ENCODE measurements at regions of chr20 and their contacts with region 1.

Region 1: DNA sequence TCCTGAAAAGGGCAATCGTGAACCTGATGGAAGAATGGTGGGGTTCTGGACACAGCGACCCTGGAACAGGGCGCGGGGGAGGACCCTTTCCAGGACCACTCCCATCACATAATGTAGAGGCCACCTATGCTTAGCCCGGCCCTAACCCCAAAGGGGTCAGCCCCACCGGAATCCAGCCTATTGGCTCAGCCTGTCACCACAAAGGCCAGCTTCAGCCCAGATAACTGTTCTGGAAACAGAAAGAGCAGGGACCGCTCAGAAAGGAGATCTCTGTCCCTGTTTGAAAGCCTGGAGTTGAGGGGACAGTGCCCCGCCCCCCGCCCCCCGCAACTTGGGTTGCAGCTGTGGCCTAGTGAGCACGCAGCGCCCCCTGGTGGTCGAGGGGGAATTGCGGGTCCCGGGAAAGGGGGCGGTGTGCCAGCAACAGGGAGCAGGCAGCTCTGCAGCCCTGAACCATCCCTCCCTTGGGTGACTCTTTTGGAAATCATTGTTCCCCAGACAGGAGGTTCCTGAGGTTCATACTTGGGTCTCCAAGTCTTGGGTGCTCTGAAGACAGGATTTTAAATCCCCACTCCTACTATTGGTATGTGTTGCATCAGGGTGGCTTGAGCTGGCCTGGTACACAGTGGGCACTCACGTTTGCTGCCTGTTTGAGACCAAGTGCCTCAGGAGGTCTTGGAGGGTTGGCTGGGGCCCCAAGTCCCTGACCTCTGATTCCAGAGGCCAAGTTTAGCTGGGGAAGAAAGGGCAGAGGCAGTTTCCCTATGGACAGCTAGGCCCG is 1.5 kb downstream of the SIGLEC1 start:
- DNase-seq: peak; percentile 60
- H3K4me3 Mint-ChIP-seq: no peak overlapping the region
- H3K27ac Mint-ChIP-seq: no peak overlapping the region
- H3K4me1 Mint-ChIP-seq: no peaks in the 10 kb centered on the region
- H3K27me3 Mint-ChIP-seq: no peaks in the 10 kb centered on the region
- CTCF ChIP-seq: peak; percentile 92

Region 2: DNA sequence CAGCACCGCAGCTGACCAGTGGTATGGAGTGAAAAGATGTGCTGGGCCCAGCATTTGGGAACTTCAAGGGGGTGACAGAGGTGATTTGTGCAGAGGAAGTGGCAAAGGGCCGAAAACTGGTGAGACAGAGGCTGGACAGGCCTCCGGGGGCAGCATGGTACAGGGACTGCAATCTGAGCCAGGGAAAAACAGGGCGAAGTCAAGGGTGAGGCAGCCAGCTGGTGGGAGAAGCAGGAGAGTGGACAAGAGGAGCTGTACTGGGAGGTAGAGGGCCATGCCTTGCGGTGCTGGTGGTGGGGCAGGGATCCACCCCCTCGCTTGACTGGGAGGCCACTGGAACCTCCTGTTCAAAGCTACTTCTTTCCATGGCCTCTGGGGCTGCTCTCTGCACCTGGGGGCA is 40.4 kb before region 1 on chr20:
- CTCF ChIA-PET with region 1: interaction called, 154 read pairs
- POLR2A ChIA-PET with region 1: interaction called, 3 read pairs
- intact Hi-C with region 1: no loop called
- DNase-seq: no peak
- H3K4me3 Mint-ChIP-seq: no peak overlapping the region
- H3K27ac Mint-ChIP-seq: no peak overlapping the region
- H3K4me1 Mint-ChIP-seq: no peaks in the 10 kb centered on the region
- H3K27me3 Mint-ChIP-seq: peaks cover 36% of the 10 kb centered on the region
- CTCF ChIP-seq: no peak

Region 3: DNA sequence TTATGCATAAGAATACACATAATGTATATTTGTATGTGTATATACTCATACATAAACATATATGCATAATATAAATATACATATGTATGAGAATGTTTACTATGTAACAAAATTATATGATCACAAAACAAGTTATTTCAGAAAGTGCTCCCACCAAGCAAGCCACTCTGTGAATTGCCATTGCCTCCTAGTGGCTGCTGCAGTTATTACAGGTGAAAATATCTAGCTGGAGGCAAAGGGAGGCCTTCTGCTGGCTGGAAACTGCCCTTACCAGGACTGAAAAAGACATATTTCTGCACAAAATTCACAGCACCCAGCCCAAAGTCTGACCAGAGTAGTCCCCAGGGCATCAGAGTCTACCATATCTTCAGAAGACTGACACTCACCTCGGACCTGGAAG is 14.7 kb before region 1 on chr20:
- CTCF ChIA-PET with region 1: interaction called, 49 read pairs
- POLR2A ChIA-PET with region 1: interaction called, 3 read pairs
- intact Hi-C with region 1: no loop called
- DNase-seq: no peak
- H3K4me3 Mint-ChIP-seq: no peak overlapping the region
- H3K27ac Mint-ChIP-seq: no peak overlapping the region
- H3K4me1 Mint-ChIP-seq: no peaks in the 10 kb centered on the region
- H3K27me3 Mint-ChIP-seq: no peaks in the 10 kb centered on the region
- CTCF ChIP-seq: peak; percentile 44

Region 4: GRCh38 chr20:3732327-3733118 is 21.6 kb after region 1 on chr20 and contains the start of gene HSPA12B:
- CTCF ChIA-PET with region 1: interaction called, 26 read pairs
- POLR2A ChIA-PET with region 1: interaction called, 4 read pairs
- intact Hi-C with region 1: no loop called
- DNase-seq: no peak
- H3K4me3 Mint-ChIP-seq: no peak within 1 kb of the TSS
- H3K27ac Mint-ChIP-seq: no peak within 1 kb of the TSS
- H3K4me1 Mint-ChIP-seq: peaks cover 23% of the 10 kb centered on the region
- H3K27me3 Mint-ChIP-seq: peaks cover 4% of the 10 kb centered on the region
- CTCF ChIP-seq: no peak
- total RNA-seq, gene HSPA12B: not detected in 2 replicates

Region 5: DNA sequence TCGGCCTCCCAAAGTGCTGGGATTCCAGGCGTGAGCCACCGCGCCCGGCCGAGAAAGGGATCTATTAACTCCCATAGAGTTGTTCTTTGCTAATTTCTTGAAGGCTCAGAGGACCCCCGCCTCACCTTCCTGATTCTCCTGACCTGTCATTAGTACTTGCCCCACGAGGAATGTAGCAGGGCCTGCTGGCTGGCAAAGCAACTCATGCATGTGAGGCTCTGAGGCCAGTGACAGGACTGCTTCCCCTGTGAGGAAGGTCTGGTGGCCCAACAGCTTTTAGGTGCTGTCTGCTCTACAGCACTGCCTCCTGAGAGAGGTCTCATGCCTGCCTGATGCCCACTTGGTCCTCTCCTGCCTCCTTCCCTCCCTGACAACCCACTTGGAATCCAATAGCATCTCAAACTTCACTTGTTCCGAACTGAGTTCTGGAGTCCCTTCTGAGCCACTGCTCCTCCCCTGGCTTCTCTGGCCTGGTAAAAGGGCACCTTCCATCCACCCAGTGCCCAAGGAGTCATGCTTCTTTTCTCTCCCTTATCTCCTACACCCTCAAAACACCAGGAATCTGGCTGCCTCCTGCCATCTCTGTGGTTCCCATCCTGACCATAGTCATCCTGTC is 137.6 kb after region 1 on chr20:
- CTCF ChIA-PET with region 1: no interaction called
- POLR2A ChIA-PET with region 1: no interaction called
- intact Hi-C with region 1: no loop called
- DNase-seq: no peak
- H3K4me3 Mint-ChIP-seq: peak overlapping the region; percentile 83
- H3K27ac Mint-ChIP-seq: peak overlapping the region; percentile 30
- H3K4me1 Mint-ChIP-seq: peaks cover 13% of the 10 kb centered on the region
- H3K27me3 Mint-ChIP-seq: no peaks in the 10 kb centered on the region
- CTCF ChIP-seq: no peak

Measured in MCF 10A (cell line).